ENCODE measurements at regions of chr14 and their contacts with region 1.

Region 1: GRCh38 chr14:59964251-59965007 is 44.5 kb downstream of the LRRC9 start:
- DNase-seq: no peak
- ATAC-seq: peak; percentile 20

Region 2: DNA sequence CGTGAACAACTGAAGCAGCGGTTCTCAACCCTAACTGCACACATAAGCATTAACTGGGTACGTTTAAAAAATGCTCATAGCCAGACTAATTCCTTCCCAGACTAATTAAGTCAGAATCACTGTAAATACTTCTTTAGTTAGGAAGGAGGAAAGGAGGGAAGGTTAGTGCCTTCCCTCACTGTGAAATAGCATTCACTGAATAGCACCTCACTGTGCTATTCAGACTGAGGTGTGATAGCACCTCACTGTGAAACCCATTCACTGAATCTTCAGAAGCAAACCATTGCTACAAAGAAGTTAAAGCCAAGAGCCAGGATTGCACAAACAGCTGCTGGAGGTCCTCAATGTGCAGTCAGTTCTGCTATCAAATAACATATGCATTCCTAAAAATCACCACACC is 152.6 kb before region 1 on chr14:
- intact Hi-C with region 1: no loop called
- DNase-seq: no peak
- ATAC-seq: no peak

Region 3: GRCh38 chr14:60025571-60025970 is 61.1 kb after region 1 on chr14:
- intact Hi-C with region 1: no loop called
- DNase-seq: no peak
- ATAC-seq: no peak

Region 4: GRCh38 chr14:60064491-60065072 is 100.2 kb after region 1 on chr14:
- intact Hi-C with region 1: loop called (anchors 10 kb)
- DNase-seq: no peak
- ATAC-seq: no peak

Region 5: DNA sequence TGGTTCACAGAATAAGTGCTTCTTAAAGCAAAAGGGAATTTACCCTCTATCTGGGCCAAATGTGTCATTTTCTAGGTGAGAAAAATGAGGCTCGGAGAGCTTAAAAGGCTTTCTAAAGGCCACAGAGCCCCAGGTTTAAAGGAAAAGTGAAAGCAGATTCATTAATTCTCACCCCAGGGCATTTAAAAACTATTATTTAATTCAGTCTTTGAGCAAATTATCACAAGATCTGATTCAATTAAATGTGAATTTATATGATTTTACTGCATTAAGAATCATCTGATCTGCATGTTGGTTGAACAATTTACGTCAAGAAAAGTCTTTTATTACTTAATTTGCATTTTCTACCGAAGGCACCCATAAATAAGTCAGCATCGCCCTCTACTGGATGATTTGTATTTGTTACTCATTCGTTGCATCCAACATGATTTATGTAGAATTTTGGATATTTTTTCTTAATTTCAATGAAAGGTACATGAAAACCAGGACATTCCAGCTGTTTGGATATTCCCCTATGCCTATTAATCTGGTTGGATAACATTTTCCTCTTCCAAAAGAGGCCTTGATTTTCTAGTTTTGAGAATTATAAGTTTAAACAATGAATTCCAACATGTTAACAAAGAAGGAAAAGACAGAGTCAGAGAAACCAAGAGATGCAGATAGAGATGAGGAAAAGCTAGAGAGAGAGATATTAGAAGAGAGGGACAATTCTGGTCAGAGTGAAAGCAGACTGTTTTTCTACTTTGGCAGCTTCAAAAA is 219.9 kb after region 1 on chr14:
- intact Hi-C with region 1: loop called (anchors 1 kb)
- DNase-seq: no peak
- ATAC-seq: no peak

Region 6: GRCh38 chr14:60356906-60357550 is 392.6 kb after region 1 on chr14:
- intact Hi-C with region 1: no loop called
- DNase-seq: no peak
- ATAC-seq: no peak

Region 7: GRCh38 chr14:60515511-60516289 is 551.3 kb after region 1 on chr14:
- intact Hi-C with region 1: no loop called
- DNase-seq: no peak
- ATAC-seq: no peak

Measured in Right ventricle myocardium inferior (tissue), 1 donor.